Sciatic nerve (tissue), 2 donors: ENCODE measurements at regions of chr3 and their contacts with region 1.

Region 1: GRCh38 chr3:105791919-105792786 is 76.7 kb downstream of the CBLB start:
- DNase-seq: peak; percentile 82
- ATAC-seq: peak; percentile 95

Region 2: DNA sequence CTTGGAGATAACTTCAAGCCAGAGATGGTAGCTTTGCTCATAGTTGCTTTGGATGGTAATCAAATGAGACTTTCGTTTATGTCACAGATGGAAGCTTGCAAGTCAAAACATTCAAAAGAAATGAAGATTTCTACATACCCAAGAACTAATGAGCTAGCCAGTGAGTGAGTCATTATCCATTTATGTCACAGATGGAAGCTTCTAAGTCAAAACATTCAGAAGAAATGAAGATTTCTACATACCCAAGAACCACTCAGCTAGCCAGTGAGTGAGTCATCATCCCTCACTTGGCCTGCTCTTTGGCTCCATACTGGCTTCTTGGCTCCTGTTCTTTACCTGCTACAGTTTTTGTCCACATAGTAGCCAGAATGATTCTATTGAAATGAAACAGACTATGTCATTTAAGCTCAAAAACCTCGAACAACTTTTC is 636.4 kb after region 1 on chr3:
- intact Hi-C with region 1: loop called (anchors 5 kb)
- DNase-seq: no peak
- ATAC-seq: peak; percentile 83